ENCODE measurements at regions of chr19 and their contacts with region 1.

Region 1: DNA sequence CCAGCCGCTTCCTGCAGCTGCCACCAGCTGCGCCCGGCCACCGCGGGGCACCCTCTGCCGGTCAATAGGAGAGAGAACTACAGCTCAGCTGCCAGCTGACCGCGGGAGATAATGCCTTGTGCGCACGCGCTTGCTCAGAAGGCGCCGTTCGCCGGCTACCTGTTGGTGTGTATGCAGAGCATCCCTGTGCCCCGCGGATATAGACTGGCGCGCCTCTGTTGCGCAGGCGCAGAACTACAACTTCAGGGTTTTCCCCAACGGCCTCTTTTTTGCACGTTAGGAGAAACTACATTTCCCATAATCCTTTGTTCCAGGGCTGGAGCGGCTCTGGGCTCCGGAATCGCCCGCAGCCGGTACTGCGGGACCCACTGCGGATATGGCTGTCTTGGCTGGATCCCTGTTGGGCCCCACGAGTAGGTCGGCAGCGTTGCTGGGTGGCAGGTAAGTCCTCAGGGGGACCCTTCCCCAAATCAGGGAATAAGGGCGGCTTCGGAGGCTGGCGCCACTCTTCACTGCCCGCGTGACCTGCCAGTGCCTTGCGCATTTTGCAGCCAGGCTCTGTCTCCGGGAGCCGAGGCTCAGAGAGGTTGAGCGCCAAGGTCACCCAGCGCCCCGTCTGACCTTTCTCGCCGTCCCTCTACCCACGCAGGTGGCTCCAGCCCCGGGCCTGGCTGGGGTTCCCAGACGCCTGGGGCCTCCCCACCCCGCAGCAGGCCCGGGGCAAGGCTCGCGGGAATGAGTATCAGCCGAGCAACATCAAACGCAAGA is at the start of gene MRPL34:
- DNase-seq: peak; percentile 94
- H3K4me3 Mint-ChIP-seq: peak within 1 kb of the TSS; percentile 90
- H3K27ac Mint-ChIP-seq: peak within 1 kb of the TSS; percentile 91
- H3K4me1 Mint-ChIP-seq: peaks cover 45% of the 10 kb centered on the region
- H3K27me3 Mint-ChIP-seq: no peaks in the 10 kb centered on the region
- total RNA-seq, gene MRPL34: 108 and 118 TPM in 2 replicates

Region 2: DNA sequence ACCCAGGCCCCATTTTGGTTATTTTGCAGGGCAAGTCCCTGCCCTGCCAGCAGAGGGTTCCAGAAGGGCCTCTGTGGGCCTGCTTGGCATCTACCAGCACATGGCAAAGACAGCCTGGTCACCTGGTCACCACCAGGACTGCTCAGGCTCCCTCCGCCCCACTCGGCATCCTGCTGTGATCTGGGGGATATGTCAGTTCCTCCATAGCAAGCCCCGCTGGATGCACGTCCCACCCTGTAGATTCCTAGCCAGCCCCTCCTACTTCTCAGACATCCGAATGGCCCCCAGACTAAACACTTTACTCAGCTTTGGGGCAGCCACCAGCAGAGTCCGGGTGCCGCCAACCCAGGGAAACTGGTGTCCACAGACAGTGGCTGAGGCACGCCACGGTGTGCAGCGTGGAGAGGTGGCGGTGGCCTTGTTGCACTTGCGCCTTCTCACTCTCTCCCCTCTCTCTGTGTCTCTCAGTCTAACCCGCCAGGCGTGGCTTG is 122.4 kb before region 1 on chr19:
- intact Hi-C with region 1: no loop called
- DNase-seq: no peak
- H3K4me3 Mint-ChIP-seq: peak overlapping the region; percentile 82
- H3K27ac Mint-ChIP-seq: peak overlapping the region; percentile 93
- H3K4me1 Mint-ChIP-seq: peaks cover 20% of the 10 kb centered on the region
- H3K27me3 Mint-ChIP-seq: no peaks in the 10 kb centered on the region

Region 3: DNA sequence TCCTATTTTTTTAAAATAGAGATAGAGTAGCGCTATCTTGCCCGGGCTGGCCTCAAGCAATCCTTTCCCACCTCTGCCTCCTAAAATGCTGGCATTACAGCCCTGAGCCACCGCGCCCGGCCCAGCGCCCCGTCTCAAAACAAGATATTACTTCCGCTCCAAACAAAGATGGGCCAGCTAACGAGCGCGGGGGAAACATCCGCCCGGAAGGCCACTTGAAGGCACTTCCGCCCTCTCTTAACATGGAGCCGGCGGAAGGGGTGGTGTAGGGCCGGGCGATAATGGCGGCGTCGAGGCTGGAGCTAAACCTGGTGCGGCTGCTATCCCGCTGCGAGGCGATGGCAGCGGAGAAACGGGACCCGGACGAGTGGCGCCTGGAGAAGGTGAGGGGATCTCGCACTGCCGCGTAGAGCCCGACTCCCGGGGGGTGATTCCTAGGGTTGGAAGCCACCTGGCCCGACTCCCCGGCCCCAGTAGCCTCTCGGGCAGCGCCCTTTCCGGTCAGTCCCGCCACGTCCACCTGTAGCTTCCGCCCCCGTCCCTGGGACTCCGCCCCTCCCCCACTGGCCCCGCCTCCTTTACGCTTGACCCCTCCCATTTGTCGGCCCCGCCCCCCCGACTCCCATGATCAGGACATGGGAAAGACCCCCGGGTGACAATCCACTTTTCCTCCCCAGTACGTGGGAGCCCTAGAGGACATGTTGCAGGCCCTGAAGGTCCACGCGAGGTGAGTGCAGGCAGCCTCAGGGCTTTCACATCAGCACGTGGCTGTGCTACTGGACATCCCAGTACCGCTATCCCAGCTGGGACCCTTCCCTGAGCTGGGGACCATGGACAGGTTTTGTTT is 90.4 kb before region 1 on chr19 and contains the start of gene USE1:
- intact Hi-C with region 1: loop called (anchors 1 kb)
- DNase-seq: peak; percentile 82
- H3K4me3 Mint-ChIP-seq: peak within 1 kb of the TSS; percentile 91
- H3K27ac Mint-ChIP-seq: peak within 1 kb of the TSS; percentile 99
- H3K4me1 Mint-ChIP-seq: peaks cover 11% of the 10 kb centered on the region
- H3K27me3 Mint-ChIP-seq: no peaks in the 10 kb centered on the region
- total RNA-seq, gene USE1: 34.6 and 36.0 TPM in 2 replicates

Region 4: GRCh38 chr19:17292286-17293097 is 13.2 kb before region 1 on chr19:
- intact Hi-C with region 1: loop called (anchors 1 kb)
- DNase-seq: peak; percentile 69
- H3K4me3 Mint-ChIP-seq: peak overlapping the region; percentile 85
- H3K27ac Mint-ChIP-seq: peak overlapping the region; percentile 87
- H3K4me1 Mint-ChIP-seq: no peaks in the 10 kb centered on the region
- H3K27me3 Mint-ChIP-seq: no peaks in the 10 kb centered on the region

Region 5: GRCh38 chr19:17419621-17420466 is 114.1 kb after region 1 on chr19 and contains the start of gene MVB12A:
- intact Hi-C with region 1: loop called (anchors 1 kb)
- DNase-seq: peak; percentile 95
- H3K4me3 Mint-ChIP-seq: peak within 1 kb of the TSS; percentile 94
- H3K27ac Mint-ChIP-seq: peak within 1 kb of the TSS; percentile 94
- H3K4me1 Mint-ChIP-seq: peaks cover 17% of the 10 kb centered on the region
- H3K27me3 Mint-ChIP-seq: no peaks in the 10 kb centered on the region
- total RNA-seq, gene MVB12A: 40.8 and 42.7 TPM in 2 replicates

Region 6: GRCh38 chr19:17555480-17555928 is 249.8 kb after region 1 on chr19 and contains the start of gene COLGALT1:
- intact Hi-C with region 1: loop called (anchors 10 kb)
- DNase-seq: peak; percentile 97
- H3K4me3 Mint-ChIP-seq: peak within 1 kb of the TSS; percentile 86
- H3K27ac Mint-ChIP-seq: peak within 1 kb of the TSS; percentile 70
- H3K4me1 Mint-ChIP-seq: peaks cover 15% of the 10 kb centered on the region
- H3K27me3 Mint-ChIP-seq: no peaks in the 10 kb centered on the region
- total RNA-seq, gene COLGALT1: 115 and 117 TPM in 2 replicates

Measured in activated T-helper 1 cell treated with anti-CD3 and anti-CD28 coated beads, Interleukin-12 subunit alpha, Interleukin-12 subunit beta, Interleukin-2, Interleukin-4 antibody, amounts not matched to agents 30 ng/mL and 10 ng/mL and 1 ng/mL, durations not matched to agents 14 hours and 24 hours and 36 hours (primary cell).